IMR-90 (cell line): ENCODE measurements at regions of chr21 and their contacts with region 1.

Region 1: GRCh38 chr21:33412832-33413519 is 9.8 kb downstream of the IFNGR2 start:
- DNase-seq: no peak
- ATAC-seq: no peak
- H3K4me3 ChIP-seq: no peak overlapping the region
- H3K27ac ChIP-seq: no peak overlapping the region
- H3K4me1 ChIP-seq: peaks cover 6% of the 10 kb centered on the region
- H3K27me3 ChIP-seq: no peaks in the 10 kb centered on the region
- CTCF ChIP-seq: no peak
- POLR2A ChIP-seq: no peak
- RAD21 ChIP-seq: no peak

Region 2: DNA sequence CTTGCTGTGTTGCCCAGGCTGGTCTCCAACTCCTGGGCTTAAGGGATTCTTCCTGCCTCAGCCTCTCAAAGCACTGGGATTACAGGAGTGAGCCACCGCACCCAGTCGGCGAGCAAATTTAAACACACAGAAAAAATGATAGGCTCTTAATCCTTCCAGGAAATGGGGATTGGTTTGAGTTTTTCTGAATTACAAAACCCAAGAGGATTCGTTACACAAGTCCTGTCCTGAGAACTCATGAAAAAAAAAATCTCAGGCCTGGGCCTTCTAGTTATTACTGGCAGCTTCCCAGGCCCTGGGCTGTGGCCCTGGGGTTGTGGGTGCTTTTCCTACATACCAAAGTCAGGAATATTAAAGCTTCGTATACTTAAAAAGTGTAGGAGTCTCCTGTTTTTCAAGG is 16.0 kb before region 1 on chr21:
- CTCF ChIA-PET with region 1: no interaction called
- POLR2A ChIA-PET with region 1: interaction called, 11 read pairs
- dilution Hi-C with region 1: no loop called
- in situ Hi-C with region 1: no loop called
- intact Hi-C with region 1: no loop called
- DNase-seq: peak; percentile 82
- ATAC-seq: peak; percentile 27
- H3K4me3 ChIP-seq: no peak overlapping the region
- H3K27ac ChIP-seq: no peak overlapping the region
- H3K4me1 ChIP-seq: peaks cover 10% of the 10 kb centered on the region
- H3K27me3 ChIP-seq: no peaks in the 10 kb centered on the region
- CTCF ChIP-seq: no peak
- POLR2A ChIP-seq: no peak
- RAD21 ChIP-seq: no peak

Region 3: DNA sequence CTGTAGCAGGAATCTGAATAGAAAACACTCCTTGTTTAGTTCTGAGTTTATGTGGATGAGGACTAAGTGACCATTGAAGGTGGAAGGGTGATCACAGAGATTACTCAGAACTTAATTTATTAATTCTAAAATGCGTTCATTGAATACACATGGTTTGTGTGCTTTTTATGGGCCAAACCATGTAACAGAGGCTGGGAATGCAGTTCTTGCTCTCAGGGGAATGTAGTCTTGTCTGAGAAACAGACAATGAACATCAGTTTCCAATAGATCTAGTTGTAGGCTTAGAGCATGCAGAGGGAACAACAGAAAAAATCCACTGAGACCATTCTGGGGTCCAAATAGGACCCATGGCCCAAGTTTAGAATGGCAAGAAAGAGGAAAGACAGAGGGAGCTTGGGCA is 275.4 kb after region 1 on chr21:
- CTCF ChIA-PET with region 1: no interaction called
- POLR2A ChIA-PET with region 1: no interaction called
- dilution Hi-C with region 1: no loop called
- in situ Hi-C with region 1: no loop called
- intact Hi-C with region 1: no loop called
- DNase-seq: no peak
- ATAC-seq: no peak
- H3K4me3 ChIP-seq: no peak overlapping the region
- H3K27ac ChIP-seq: no peak overlapping the region
- H3K4me1 ChIP-seq: peaks cover 9% of the 10 kb centered on the region
- H3K27me3 ChIP-seq: no peaks in the 10 kb centered on the region
- CTCF ChIP-seq: no peak
- POLR2A ChIP-seq: no peak
- RAD21 ChIP-seq: no peak